ENCODE measurements at regions of chr19 and their contacts with region 1.

Region 1: GRCh38 chr19:40444192-40445028 is at the start of gene SERTAD3:
- DNase-seq: peak; percentile 99
- H3K4me3 Mint-ChIP-seq: peak within 1 kb of the TSS; percentile 98
- H3K27ac Mint-ChIP-seq: peak within 1 kb of the TSS; percentile 96
- H3K4me1 Mint-ChIP-seq: peaks cover 14% of the 10 kb centered on the region
- H3K27me3 Mint-ChIP-seq: no peaks in the 10 kb centered on the region
- total RNA-seq, gene SERTAD3: 10.8 and 12.5 TPM in 2 replicates

Region 2: GRCh38 chr19:40285353-40286234 is 158.8 kb before region 1 on chr19:
- intact Hi-C with region 1: loop called (anchors 1 kb)
- DNase-seq: peak; percentile 99
- H3K4me3 Mint-ChIP-seq: peak overlapping the region; percentile 99
- H3K27ac Mint-ChIP-seq: peak overlapping the region; percentile 99
- H3K4me1 Mint-ChIP-seq: peaks cover 37% of the 10 kb centered on the region
- H3K27me3 Mint-ChIP-seq: peaks cover 2% of the 10 kb centered on the region

Region 3: GRCh38 chr19:40341601-40342482 is 102.6 kb before region 1 on chr19:
- intact Hi-C with region 1: no loop called
- DNase-seq: no peak
- H3K4me3 Mint-ChIP-seq: no peak overlapping the region
- H3K27ac Mint-ChIP-seq: no peak overlapping the region
- H3K4me1 Mint-ChIP-seq: peaks cover 6% of the 10 kb centered on the region
- H3K27me3 Mint-ChIP-seq: no peaks in the 10 kb centered on the region

Region 4: DNA sequence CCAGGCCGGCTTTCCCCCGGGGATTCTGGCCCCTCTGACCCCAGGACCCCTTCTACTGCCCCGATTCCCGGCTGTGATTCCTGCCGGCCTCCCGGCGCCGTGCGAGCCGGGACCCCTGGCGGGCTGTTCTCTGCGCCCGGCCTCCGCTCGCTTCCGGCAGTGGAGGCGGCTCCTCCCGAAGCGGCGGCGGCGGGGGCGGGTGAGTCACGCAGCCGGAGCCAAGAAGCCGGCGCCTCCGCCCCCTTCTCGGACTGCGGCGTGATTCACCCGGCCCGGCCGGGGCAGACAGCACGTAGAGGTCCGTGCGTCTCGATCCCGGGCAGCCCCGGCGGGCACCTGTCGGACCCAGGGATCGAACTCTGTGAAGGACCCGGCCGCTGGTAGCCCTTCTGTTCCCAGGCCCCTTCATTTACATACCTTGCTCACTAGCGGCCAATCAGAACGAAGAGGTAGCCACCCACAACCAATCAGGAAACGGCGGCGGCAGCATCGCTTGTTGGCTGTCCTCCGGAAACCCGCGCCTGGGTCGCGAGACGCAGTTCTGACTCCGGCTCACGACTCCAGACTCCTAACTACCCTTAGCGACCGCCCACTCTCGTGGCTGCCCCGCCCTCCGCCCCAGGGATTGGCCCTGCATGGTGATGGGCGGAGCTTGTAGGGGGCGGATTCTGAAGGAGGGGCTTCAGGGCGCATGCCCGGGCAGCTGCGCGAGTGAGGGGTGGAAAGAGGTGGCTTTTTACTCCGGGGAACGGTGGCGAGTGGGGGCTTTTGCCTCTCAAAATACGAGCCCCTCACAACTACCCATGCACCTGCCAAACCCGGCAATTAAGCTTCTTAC is 18.7 kb before region 1 on chr19 and contains the start of gene SERTAD1:
- intact Hi-C with region 1: loop called (anchors 1 kb)
- DNase-seq: peak; percentile 100
- H3K4me3 Mint-ChIP-seq: peak within 1 kb of the TSS; percentile 92
- H3K27ac Mint-ChIP-seq: peak within 1 kb of the TSS; percentile 91
- H3K4me1 Mint-ChIP-seq: peaks cover 26% of the 10 kb centered on the region
- H3K27me3 Mint-ChIP-seq: peaks cover 5% of the 10 kb centered on the region
- total RNA-seq, gene SERTAD1: 19.3 and 20.8 TPM in 2 replicates

Region 5: DNA sequence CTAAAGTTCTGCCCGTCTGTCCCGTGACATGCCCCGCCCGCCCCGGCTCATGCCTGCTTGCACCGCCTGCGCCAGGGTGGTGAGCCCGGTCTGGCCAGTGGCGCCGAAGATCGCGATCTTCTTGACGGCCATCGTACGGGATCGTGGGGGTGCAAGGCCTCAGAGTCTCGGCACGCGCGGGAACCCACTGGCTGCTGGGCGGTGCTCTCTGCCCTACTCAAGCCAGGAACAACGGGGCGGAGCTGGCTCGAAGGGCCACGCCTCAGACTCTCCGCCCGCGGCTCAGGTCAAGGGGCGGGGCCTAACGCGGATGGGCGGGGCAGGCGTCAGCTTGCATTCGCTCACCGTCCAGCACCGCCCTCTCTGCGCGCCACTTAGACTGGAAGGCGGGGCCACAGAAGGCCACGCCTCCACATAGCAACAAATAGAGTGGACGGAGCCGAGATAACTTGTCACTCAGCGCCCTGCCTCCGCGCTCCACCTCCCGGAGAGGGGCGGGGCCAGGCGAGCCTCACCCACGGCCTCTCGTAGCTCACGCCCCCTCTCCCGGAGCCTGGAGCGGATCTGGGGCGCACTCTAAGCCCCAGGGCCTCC is 21.2 kb after region 1 on chr19 and contains the start of gene BLVRB:
- intact Hi-C with region 1: loop called (anchors 1 kb)
- DNase-seq: peak; percentile 100
- H3K4me3 Mint-ChIP-seq: peak within 1 kb of the TSS; percentile 96
- H3K27ac Mint-ChIP-seq: peak within 1 kb of the TSS; percentile 87
- H3K4me1 Mint-ChIP-seq: peaks cover 24% of the 10 kb centered on the region
- H3K27me3 Mint-ChIP-seq: peaks cover 23% of the 10 kb centered on the region
- total RNA-seq, gene BLVRB: 7.5 and 10.6 TPM in 2 replicates

Region 6: DNA sequence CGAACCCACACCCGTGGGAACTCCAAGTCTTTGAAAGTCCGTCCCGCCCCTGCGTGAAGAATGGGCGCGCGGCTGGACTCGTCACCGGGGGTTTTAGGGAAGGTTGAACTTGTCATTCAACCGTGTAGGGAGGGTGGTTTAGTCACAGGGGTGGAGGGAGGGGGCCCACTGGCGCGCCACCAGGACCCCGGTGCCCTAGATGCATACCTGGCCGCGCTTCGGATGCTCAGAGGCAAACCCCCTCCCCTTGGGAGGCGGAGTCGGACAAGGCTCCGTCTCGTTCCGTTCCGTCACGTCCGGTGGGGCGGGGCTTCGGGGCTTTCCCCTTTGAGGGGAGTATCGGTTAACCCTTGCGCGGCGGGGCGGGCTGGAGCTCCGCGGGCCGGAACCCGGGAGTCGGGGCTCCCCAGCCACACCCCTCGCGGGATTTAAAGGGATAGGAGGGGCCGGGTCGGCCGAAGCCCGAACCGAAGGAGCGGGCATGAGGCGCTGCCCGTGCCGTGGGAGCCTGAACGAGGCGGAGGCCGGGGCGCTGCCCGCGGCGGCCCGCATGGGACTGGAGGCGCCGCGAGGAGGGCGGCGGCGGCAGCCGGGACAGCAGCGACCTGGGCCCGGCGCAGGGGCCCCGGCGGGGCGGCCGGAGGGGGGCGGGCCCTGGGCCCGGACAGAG is 272.4 kb after region 1 on chr19 and contains the starts of genes COQ8B and ITPKC:
- intact Hi-C with region 1: loop called (anchors 1 kb)
- DNase-seq: peak; percentile 100
- H3K4me3 Mint-ChIP-seq: peak within 1 kb of the TSS; percentile 90
- H3K27ac Mint-ChIP-seq: peak within 1 kb of the TSS; percentile 94
- H3K4me1 Mint-ChIP-seq: peaks cover 52% of the 10 kb centered on the region
- H3K27me3 Mint-ChIP-seq: no peaks in the 10 kb centered on the region
- total RNA-seq, gene COQ8B: 32.5 and 33.4 TPM in 2 replicates
- total RNA-seq, gene ITPKC: 7.7 and 8.6 TPM in 2 replicates

Measured in activated CD4-positive, alpha-beta T cell treated with anti-CD3 and anti-CD28 coated beads, Interleukin-2, amount 10 ng/mL, durations not matched to agents 24 days and 14 days (primary cell).